Activated CD4-positive, alpha-beta T cell treated with anti-CD3 and anti-CD28 coated beads for 36 hours (primary cell): ENCODE measurements at regions of chr2 and their contacts with region 1.

Region 1: DNA sequence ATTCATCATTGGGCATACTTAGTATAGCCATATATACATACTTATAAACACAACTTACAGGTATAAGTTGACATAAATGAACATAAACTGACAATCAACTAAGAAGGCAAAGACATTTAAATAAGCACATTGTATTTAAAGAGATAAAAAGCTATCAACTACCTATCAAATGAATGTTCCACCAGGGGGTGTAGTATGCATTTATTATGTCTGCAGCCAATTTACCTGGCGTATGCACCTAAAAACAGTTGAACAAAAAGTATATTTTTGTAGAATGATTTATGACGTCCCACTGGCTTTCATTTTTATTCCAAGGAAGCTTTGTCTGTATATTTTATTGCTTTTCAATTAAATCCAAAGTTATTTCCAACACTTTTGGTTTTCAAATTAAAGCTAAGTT is 323.5 kb downstream of the AFF3 start:
- DNase-seq: no peak
- ATAC-seq: no peak
- H3K4me3 Mint-ChIP-seq: no peak overlapping the region
- H3K27ac Mint-ChIP-seq: no peak overlapping the region
- H3K4me1 Mint-ChIP-seq: no peaks in the 10 kb centered on the region
- H3K27me3 Mint-ChIP-seq: no peaks in the 10 kb centered on the region

Region 2: DNA sequence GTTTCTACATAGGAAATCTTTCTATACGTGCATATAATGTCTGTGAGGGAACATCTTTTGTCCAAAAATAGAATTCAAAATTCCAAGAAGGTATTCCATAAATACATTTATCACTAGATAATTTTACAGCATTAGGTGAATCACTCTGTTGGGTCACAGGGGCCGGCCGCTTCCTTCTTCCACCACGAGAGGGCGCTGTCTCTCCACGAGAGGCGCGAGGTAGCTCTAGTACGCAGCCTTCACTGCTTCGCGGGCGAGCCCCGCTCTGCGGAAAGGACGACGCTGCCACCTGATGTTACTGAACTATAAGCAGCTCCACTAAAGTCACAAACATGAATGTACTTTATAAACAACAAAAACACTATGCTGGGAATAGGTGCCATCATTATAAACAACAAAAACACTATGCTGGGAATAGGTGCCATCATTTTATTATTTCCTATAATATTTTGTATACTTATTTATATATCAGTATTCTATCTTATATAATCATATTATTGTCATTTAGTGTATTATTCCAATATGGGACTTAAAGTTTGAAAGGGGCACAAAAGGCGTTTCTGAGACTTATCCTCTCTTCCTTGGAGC is 259.7 kb before region 1 on chr2:
- CTCF ChIA-PET with region 1: interaction called, 4 read pairs
- POLR2A ChIA-PET with region 1: no interaction called
- intact Hi-C with region 1: loop called (anchors 5 to 10 kb)
- DNase-seq: peak; percentile 92
- ATAC-seq: peak; percentile 97
- H3K4me3 Mint-ChIP-seq: no peak overlapping the region
- H3K27ac Mint-ChIP-seq: no peak overlapping the region
- H3K4me1 Mint-ChIP-seq: peaks cover 2% of the 10 kb centered on the region
- H3K27me3 Mint-ChIP-seq: no peaks in the 10 kb centered on the region

Region 3: DNA sequence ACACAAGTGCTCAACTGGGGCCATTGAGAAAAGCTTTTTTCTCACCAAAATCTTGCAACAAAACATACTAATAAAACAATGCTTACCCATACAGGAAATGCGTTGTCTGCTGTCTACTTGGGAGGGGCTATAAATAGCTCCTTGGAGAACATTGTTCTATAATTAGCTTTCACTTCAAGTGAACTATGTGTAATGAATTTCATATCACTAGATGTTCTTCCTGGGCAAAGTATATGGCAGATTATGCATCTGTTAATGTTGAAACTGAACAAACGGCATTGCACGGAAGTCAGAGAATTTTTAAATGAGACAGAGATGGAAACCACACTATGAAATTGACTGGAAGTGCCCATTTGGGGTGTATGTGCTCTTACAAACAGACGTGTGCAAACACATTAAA is 994.7 kb after region 1 on chr2:
- CTCF ChIA-PET with region 1: no interaction called
- POLR2A ChIA-PET with region 1: no interaction called
- intact Hi-C with region 1: no loop called
- DNase-seq: no peak
- ATAC-seq: peak; percentile 86
- H3K4me3 Mint-ChIP-seq: no peak overlapping the region
- H3K27ac Mint-ChIP-seq: peak overlapping the region; percentile 76
- H3K4me1 Mint-ChIP-seq: peaks cover 34% of the 10 kb centered on the region
- H3K27me3 Mint-ChIP-seq: peaks cover 10% of the 10 kb centered on the region